Activated CD8-positive, alpha-beta T cell treated with anti-CD3 and anti-CD28 coated beads for 36 hours (primary cell): ENCODE measurements at regions of chr14 and their contacts with region 1.

Region 1: GRCh38 chr14:39174560-39175444 is at the start of gene PNN:
- DNase-seq: peak; percentile 97
- ATAC-seq: peak; percentile 88
- H3K4me3 Mint-ChIP-seq: peak within 1 kb of the TSS; percentile 93
- H3K27ac Mint-ChIP-seq: peak within 1 kb of the TSS; percentile 97
- H3K4me1 Mint-ChIP-seq: peaks cover 34% of the 10 kb centered on the region
- H3K27me3 Mint-ChIP-seq: no peaks in the 10 kb centered on the region
- CTCF ChIP-seq: no peak
- total RNA-seq, gene PNN: 106 to 107 TPM

Region 2: DNA sequence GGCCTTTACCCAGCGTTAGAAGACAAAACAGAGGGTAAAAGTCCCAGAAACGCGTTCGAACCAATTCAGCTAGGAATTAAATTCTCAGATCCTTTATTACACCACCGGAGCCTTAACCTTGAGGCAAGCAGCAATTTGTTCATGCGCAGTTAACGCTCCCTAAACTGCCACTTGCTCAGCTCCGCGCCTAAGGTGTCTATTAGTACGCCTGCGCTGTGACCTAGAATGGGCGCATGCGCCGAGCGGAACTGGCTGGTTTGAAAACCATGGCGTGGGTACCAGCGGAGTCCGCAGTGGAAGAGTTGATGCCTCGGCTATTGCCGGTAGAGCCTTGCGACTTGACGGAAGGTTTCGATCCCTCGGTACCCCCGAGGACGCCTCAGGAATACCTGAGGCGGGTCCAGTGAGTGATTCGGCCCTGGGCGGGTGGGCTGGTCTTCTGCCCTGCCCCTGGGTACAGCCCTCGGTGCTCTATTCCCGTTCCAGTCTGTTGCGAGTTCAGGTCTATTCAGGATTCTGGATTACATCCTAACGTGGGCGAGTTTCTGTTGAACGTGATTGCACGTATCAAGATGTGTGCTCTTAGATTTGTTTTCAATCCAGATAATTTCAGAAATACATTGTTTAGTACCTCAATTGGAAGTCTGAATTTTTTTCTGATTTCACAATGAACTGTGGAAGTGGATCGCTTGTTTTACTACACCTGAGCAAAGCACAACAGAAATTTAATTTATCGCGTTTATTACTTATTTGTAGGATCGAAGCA is 60.5 kb before region 1 on chr14 and contains the start of gene GEMIN2:
- CTCF ChIA-PET with region 1: interaction called, 5 read pairs
- POLR2A ChIA-PET with region 1: interaction called, 10 read pairs
- intact Hi-C with region 1: loop called (anchors 5 kb)
- DNase-seq: peak; percentile 97
- ATAC-seq: peak; percentile 99
- H3K4me3 Mint-ChIP-seq: peak within 1 kb of the TSS; percentile 96
- H3K27ac Mint-ChIP-seq: peak within 1 kb of the TSS; percentile 95
- H3K4me1 Mint-ChIP-seq: peaks cover 21% of the 10 kb centered on the region
- H3K27me3 Mint-ChIP-seq: no peaks in the 10 kb centered on the region
- CTCF ChIP-seq: no peak
- total RNA-seq, gene GEMIN2: 21.6 to 25.3 TPM

Region 3: GRCh38 chr14:39266871-39267591 is 92.2 kb after region 1 on chr14:
- CTCF ChIA-PET with region 1: no interaction called
- POLR2A ChIA-PET with region 1: interaction called, 8 read pairs
- intact Hi-C with region 1: loop called (anchors 10 kb)
- DNase-seq: peak; percentile 75
- ATAC-seq: peak; percentile 75
- H3K4me3 Mint-ChIP-seq: peak overlapping the region; percentile 77
- H3K27ac Mint-ChIP-seq: peak overlapping the region; percentile 99
- H3K4me1 Mint-ChIP-seq: peaks cover 47% of the 10 kb centered on the region
- H3K27me3 Mint-ChIP-seq: no peaks in the 10 kb centered on the region
- CTCF ChIP-seq: no peak

Region 4: GRCh38 chr14:39426605-39427004 is 251.8 kb after region 1 on chr14:
- CTCF ChIA-PET with region 1: interaction called, 7 read pairs
- POLR2A ChIA-PET with region 1: interaction called, 10 read pairs
- intact Hi-C with region 1: loop called (anchors 5 kb)
- DNase-seq: no peak
- ATAC-seq: no peak
- H3K4me3 Mint-ChIP-seq: peak overlapping the region; percentile 31
- H3K27ac Mint-ChIP-seq: peak overlapping the region; percentile 36
- H3K4me1 Mint-ChIP-seq: peaks cover 54% of the 10 kb centered on the region
- H3K27me3 Mint-ChIP-seq: no peaks in the 10 kb centered on the region
- CTCF ChIP-seq: peak; percentile 55